Ascending aorta (tissue), 2 donors: ENCODE measurements at regions of chr19 and their contacts with region 1.

Region 1: DNA sequence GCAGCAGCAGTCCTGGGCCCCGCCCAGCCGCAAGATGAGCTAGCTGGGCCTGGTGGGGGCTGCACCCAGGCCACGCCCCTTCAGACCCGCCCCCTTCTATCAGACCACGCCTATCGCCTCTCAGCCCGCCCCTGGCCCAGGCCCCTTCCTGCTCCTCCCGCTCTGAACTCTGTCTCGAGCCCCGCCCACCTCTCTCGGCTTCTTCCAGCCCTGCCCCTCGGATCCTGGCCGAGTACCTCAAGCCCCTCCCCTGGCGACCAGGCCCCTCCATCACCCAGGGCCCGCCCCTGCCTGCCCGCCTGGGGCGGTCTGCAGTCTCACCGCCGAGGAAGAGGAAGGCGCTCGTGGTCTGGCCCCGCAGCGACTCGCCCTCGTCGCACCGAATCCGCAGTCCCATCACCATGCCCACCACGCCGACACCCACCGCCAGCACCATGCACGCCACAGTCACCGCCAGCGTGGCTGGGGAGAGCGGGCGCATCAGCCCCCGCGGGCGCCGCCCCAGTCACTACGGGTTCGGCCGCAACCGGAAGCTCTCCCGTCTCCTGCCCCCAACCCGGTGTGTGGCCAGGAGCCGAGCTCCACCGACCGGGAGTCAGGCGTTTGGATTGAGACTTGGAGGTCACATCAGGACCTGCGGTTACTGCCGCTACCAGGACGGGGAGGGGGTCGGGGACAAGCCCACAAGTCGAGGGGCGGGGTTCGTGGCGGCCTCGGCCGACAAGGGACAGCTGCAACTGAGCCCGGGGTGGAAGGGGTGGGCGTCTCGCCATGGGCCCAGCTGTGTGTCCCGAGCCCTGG is 1.0 kb downstream of the CLDND2 start:
- DNase-seq: peak; percentile 95 to 100
- H3K4me3 ChIP-seq: peak overlapping the region; percentile 79 to 82
- H3K27ac ChIP-seq: peak overlapping the region; percentile 83 to 94
- H3K4me1 ChIP-seq: peaks cover 6 to 12% of the 10 kb centered on the region in 2 donors
- H3K27me3 ChIP-seq: no peaks in the 10 kb centered on the region
- CTCF ChIP-seq: no peak

Region 2: GRCh38 chr19:50804420-50805272 is 563.1 kb before region 1 on chr19:
- intact Hi-C with region 1: loop called (anchors 10 kb)
- DNase-seq: peak; percentile 95 to 99
- H3K4me3 ChIP-seq: peak overlapping the region; percentile 92 to 93
- H3K27ac ChIP-seq: peak overlapping the region; percentile 97
- H3K4me1 ChIP-seq: peaks cover 0 to 13% of the 10 kb centered on the region in 2 donors
- H3K27me3 ChIP-seq: no peaks in the 10 kb centered on the region
- CTCF ChIP-seq: no peak

Region 3: DNA sequence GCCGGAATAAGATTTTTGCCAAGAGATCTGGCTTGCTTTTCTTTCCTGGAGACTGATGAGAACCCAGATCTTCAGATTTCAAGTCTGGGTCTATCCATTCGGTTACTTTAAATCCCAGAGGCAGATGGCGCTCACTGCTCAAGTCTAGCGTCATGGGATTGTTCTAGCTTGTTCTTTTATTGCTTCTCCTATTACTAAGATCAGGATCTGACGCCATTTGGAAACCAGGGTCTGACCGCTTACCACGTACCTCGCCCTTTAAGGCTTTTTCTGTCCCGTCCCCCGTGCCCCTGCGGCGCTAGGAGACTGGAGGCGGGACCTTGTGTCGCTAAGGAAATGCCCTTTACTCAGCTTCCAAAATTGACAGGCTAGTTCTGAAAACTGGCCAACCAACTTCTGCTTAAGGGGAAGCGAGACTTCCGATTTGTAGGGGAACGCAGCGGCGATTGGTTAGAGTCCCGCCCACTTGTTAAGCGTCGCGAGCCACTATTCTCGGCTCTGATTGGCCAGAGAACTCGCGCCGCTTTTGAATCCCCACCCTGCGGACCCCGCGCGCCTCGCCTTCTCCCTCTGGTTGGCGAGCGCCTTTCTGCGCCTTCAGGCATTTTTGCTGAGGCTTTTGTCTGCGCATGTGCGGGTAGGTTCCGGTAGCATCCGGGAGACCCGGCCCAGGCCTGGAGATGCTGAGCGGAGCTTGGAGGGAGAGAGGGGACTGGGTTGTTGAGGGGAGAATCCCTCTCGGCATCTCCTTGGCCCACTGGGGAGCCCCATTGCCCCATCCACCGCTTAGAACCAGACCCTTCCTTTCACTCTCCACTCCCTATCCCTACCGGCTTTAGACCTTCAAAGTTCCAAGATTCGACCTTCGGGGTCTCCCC is 26.4 kb after region 1 on chr19:
- intact Hi-C with region 1: loop called (anchors 1 kb)
- DNase-seq: peak; percentile 92 to 98
- H3K4me3 ChIP-seq: peak overlapping the region; percentile 43 to 63
- H3K27ac ChIP-seq: peak overlapping the region; percentile 74
- H3K4me1 ChIP-seq: peaks cover 3 to 8% of the 10 kb centered on the region in 2 donors
- H3K27me3 ChIP-seq: no peaks in the 10 kb centered on the region
- CTCF ChIP-seq: peak in 1 of 3 experiments; percentile 5

Region 4: DNA sequence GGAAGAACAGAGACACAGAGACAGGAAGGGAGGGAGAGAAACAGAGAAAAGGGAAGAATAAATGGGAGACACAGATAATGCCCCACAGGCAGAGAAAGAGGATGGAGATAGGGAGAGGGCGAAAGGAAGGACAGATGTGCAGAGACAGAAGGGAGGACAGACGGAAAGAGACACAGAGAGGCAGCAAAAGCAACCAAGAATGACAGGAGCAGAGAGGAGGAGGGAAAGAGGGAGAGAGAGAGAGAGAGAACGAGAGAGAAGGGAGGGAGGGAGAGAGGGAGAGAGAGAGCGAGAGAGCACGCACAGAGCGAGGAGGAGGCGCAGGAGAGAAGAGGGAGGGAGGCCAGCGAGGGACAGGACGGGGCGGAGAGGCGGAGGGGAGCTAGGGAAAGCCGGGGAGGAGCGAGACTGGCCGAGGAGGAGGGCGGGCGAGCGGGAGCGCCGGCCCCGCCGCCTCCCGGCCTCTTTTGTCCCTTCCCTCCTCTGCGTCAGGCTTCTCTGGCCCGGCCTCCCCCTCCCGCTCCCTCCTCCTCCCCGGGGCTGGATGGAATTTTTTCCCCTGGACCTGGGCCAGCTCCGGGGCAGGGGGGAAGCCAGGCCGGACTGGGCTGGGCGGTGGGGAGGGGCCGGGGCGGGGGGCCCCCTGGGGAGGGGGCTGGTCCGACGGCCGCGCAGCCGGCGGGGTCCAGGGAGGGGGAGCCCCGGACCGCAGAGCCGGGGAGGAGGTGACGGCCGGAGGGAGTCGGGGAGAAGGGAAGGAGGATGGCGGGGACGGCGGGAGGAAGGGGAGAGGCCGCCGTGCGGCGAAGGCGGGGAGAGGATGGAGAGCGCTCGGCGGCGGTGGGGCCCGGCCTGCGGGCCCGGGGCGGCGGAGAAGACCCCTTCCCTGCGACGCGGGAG is 321.2 kb after region 1 on chr19:
- intact Hi-C with region 1: loop called (anchors 10 kb)
- DNase-seq: peak in 1 of 2 donors; percentile 94
- H3K4me3 ChIP-seq: peak overlapping the region; percentile 71 to 89
- H3K27ac ChIP-seq: peak overlapping the region; percentile 97 to 100
- H3K4me1 ChIP-seq: peaks cover 12 to 21% of the 10 kb centered on the region in 2 donors
- H3K27me3 ChIP-seq: no peaks in the 10 kb centered on the region
- CTCF ChIP-seq: no peak